GM10248 (cell line): ENCODE measurements at regions of chr16 and their contacts with region 1.

Region 1: GRCh38 chr16:3023669-3024478 is at the starts of genes HCFC1R1 and THOC6:
- DNase-seq: peak; percentile 92
- CTCF ChIP-seq: no peak

Region 2: GRCh38 chr16:2937170-2937569 is 86.7 kb before region 1 on chr16:
- CTCF ChIA-PET with region 1: no interaction called
- POLR2A ChIA-PET with region 1: no interaction called
- DNase-seq: no peak
- CTCF ChIP-seq: no peak

Region 3: DNA sequence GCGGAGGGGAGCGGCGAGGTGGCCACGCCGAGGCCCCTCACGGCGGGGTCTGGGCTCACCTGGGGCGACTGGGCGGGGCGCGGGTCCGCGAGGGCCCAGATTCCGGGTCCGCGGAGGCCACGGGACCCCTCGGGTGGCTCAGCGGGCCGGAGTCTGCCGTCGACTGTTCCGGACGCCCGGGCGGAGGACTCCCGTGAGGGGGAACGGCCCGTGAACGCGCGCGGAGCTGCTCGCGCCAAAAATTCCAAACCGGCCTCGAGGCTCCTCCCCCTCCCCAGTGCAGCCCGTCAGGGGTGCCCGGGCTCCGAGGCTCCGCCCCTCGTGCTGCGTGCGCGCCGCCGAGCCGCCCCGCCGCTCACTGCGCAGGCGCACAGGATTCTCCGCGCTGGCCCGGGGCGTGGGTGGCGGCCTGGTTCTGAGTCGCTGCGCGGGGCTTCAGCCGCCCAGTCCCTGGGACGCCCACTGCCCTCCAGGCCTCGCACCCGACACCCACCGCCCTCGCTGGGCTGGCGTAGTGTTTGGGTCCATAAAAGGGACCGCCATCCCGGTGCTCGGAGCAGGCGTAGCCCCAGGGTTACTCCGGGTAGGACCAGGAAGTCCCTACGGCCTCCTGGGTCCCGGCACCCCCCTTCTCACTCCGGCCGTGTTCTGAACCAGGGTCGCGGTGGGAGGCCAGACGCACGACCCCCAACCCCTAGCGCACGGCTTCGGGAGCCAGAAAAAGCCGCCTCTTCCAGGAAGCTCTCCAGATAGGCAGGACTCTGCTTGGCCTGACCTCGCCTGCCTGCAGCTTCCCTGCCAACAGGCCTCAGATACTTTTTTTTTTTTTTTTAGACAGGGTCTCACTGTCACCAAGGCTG is 43.4 kb before region 1 on chr16 and contains the start of gene PKMYT1:
- CTCF ChIA-PET with region 1: interaction called, 13 read pairs
- POLR2A ChIA-PET with region 1: no interaction called
- DNase-seq: peak; percentile 100
- CTCF ChIP-seq: no peak

Region 4: GRCh38 chr16:3003582-3004302 is 20.1 kb before region 1 on chr16:
- CTCF ChIA-PET with region 1: interaction called, 231 read pairs
- POLR2A ChIA-PET with region 1: interaction called, 4 read pairs
- DNase-seq: peak; percentile 99
- CTCF ChIP-seq: peak; percentile 73

Region 5: GRCh38 chr16:3045357-3045728 is 21.5 kb after region 1 on chr16:
- CTCF ChIA-PET with region 1: interaction called, 140 read pairs
- POLR2A ChIA-PET with region 1: interaction called, 3 read pairs
- DNase-seq: no peak
- CTCF ChIP-seq: no peak

Region 6: DNA sequence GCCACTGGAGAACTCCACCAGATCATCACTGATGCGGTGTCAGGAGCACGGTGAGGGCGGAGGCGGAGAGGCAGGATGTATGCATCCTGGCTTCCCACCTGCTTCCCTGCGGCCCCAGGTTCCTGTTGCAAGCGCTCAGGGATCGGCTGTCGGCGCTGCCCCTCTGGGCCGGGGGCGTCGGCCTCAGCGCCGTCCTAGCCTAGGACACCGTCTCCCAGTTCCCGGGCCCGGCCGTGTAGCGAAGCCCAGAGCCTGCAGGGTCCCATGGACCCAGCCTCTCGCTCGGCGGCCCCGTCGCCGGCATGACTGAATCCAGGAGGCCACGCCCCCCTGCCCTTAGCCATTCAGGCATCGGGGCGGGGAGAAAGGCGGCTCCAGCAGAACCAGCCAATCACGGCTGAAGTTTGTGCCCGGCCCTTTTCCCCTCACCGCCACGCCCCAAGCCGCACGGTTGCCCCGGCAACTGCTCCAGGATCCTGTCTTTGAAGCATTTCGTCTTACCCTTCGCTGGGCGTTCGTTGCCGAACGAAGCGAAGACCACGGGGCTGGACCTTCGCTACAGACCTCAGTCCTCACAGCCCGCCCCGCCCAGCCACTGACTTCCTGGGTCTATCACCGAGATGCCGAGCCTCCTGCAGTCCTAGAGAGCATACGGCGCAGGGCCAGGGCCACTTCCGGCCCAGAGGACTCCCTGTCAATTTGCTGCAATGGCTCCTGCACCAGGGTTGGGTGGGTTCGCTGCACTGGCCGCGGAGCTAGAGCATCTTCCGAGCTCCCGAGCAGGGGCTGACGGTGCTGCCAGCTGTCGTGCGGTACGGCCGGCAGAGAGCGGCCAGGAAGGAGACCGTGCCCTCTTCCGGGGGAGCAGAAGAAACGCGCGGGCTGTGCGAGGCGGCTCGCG is 100.4 kb after region 1 on chr16:
- CTCF ChIA-PET with region 1: interaction called, 177 read pairs
- POLR2A ChIA-PET with region 1: no interaction called
- DNase-seq: peak; percentile 97
- CTCF ChIP-seq: peak; percentile 20

Region 7: DNA sequence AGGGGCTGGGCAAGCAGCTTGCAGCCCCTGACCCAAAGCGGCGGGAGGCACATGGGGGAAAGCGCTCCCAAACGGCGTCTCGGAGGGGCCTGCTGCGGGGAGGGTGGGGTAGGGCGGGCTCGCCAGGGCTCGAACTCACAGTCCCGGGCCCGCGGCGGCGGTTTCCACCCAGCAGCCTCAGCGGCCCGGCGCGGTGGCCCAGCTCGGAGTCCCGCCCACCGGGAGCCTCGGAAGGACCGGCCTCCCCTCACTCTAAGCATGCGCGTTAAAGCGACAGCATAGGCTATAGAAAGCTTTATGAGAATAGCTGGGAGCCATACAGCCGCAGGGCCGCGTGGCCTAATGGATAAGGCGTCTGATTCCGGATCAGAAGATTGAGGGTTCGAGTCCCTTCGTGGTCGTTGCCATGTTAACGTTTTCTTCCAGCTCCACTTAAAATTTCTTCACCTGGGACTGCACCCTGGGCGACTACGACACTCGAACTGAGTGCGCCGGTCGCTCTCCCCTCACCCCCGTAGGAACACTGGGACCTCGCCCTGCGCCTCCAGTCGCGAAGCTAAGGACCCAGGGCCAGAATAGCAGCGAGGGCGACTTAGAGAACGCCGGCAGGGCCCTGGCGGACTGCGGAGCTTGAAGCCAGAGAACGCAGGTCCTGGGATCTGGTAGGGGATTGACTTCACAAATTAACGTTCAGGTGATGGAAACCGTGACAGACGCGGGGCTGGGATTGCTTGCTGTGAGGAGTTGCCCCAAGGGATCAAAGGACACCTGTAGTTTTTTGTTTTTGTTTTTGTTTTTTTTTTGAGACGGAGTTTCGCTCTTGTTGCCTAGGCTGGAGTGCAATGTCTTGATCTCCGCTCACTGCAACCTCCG is 126.7 kb after region 1 on chr16:
- CTCF ChIA-PET with region 1: interaction called, 10 read pairs
- POLR2A ChIA-PET with region 1: no interaction called
- DNase-seq: peak; percentile 97
- CTCF ChIP-seq: no peak

Region 8: DNA sequence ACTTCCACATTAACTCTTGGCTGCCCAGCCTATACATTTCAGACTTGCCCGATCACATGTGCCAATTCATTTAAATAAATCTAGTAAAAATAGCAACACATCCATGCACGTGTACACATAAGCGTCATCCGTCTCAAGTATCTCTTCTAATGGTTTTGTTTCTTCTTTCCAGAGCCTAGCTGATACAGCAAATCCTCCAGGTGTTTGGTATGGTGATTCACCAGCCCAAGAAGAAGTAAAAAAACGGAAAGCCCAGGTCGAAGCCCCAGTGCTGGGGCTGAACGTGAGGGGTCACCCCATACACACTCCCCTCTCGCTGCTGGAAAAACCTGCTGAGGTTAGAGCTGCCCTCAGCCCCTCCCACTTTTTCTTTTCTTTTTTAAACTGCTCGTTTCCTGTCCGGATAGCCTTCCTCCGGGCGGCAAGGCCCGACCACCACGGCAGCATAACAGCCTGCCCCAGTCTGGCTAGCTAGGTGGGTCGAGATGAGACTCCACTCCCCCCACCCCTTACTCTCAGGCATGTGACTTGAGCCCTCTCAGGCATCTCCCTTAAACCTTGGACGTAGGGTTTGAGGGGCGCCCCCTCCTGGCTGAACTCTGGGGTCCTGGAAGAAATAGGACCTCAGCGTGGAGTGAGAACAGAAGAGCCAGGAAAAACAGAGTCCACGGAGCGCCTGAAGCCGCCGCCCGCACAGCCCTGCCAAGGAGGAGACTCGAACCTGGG is 150.2 kb after region 1 on chr16:
- CTCF ChIA-PET with region 1: interaction called, 10 read pairs
- POLR2A ChIA-PET with region 1: no interaction called
- DNase-seq: peak; percentile 59
- CTCF ChIP-seq: peak; percentile 38

Region 9: GRCh38 chr16:3234543-3235541 is 211.0 kb after region 1 on chr16 and contains the start of gene ZNF200:
- CTCF ChIA-PET with region 1: no interaction called
- POLR2A ChIA-PET with region 1: no interaction called
- DNase-seq: peak; percentile 98
- CTCF ChIP-seq: no peak